IMR-90 (cell line): ENCODE measurements at regions of chr2 and their contacts with region 1.

Region 1: GRCh38 chr2:157336137-157337010 is 10.8 kb upstream of the ERMN start:
- DNase-seq: peak; percentile 34
- ATAC-seq: peak; percentile 53; the same call in 1 of the 2 replicates
- H3K4me3 ChIP-seq: no peak overlapping the region
- H3K27ac ChIP-seq: no peak overlapping the region
- H3K4me1 ChIP-seq: no peaks in the 10 kb centered on the region
- H3K27me3 ChIP-seq: no peaks in the 10 kb centered on the region; the same call in 1 of the 2 replicates
- CTCF ChIP-seq: peak; percentile 61
- POLR2A ChIP-seq: no peak
- RAD21 ChIP-seq: peak; percentile 34; the same call in 1 of the 2 replicates

Region 2: DNA sequence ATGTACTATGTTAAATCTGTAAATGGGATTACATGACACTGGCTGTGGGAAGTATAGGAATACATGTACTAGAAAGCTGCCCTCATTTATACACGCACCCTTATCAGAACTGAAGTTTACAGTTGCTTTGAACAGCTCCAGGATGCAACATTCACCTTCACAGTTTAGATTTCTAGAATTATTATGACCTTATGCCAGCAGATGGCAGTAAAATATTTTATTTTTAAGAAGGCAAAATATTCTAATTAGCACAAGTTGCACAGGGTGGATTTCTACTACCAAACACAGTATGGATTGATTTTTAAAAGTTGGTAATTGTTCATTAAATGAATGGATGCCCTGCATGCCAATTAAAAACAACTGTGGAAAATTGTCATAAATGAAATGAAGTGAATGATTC is 1967.4 kb before region 1 on chr2:
- CTCF ChIA-PET with region 1: no interaction called
- POLR2A ChIA-PET with region 1: no interaction called
- dilution Hi-C with region 1: no loop called
- in situ Hi-C with region 1: no loop called
- intact Hi-C with region 1: loop called (anchors 2 kb)
- DNase-seq: peak; percentile 0
- ATAC-seq: no peak
- H3K4me3 ChIP-seq: no peak overlapping the region
- H3K27ac ChIP-seq: no peak overlapping the region
- H3K4me1 ChIP-seq: no peaks in the 10 kb centered on the region
- H3K27me3 ChIP-seq: no peaks in the 10 kb centered on the region
- CTCF ChIP-seq: peak; percentile 26
- POLR2A ChIP-seq: no peak
- RAD21 ChIP-seq: no peak

Region 3: DNA sequence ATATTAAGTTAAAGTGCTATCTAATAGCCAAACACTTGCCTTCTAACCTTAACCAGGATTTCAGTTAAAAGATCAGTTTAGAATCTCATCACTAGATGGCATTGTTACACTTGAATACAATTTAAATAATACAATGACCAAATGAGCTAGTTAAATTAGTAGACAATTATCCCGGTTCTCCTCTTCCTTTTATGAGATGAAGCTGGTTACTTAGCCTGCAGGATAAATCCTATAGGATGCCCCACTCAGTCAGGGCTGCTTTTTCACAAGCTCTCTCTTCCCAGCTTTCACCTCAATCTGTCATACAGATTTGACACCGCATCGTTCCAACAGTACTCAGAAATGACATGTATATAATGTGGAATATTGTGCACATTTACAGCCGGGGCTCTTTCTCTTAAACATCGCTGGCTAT is 1959.1 kb before region 1 on chr2:
- CTCF ChIA-PET with region 1: interaction called, 11 read pairs
- POLR2A ChIA-PET with region 1: no interaction called
- dilution Hi-C with region 1: no loop called
- in situ Hi-C with region 1: loop called (anchors 25 kb)
- intact Hi-C with region 1: loop called (anchors 2 kb)
- DNase-seq: peak; percentile 35
- ATAC-seq: no peak
- H3K4me3 ChIP-seq: no peak overlapping the region
- H3K27ac ChIP-seq: no peak overlapping the region
- H3K4me1 ChIP-seq: no peaks in the 10 kb centered on the region
- H3K27me3 ChIP-seq: no peaks in the 10 kb centered on the region
- CTCF ChIP-seq: peak; percentile 43
- POLR2A ChIP-seq: no peak
- RAD21 ChIP-seq: peak; percentile 46

Region 4: GRCh38 chr2:156486147-156486546 is 850.2 kb before region 1 on chr2:
- CTCF ChIA-PET with region 1: no interaction called
- POLR2A ChIA-PET with region 1: no interaction called
- dilution Hi-C with region 1: no loop called
- in situ Hi-C with region 1: no loop called
- intact Hi-C with region 1: no loop called
- DNase-seq: peak; percentile 60
- ATAC-seq: no peak
- H3K4me3 ChIP-seq: no peak overlapping the region
- H3K27ac ChIP-seq: no peak overlapping the region
- H3K4me1 ChIP-seq: peaks cover 4% of the 10 kb centered on the region; the same call in 1 of the 2 replicates
- H3K27me3 ChIP-seq: no peaks in the 10 kb centered on the region
- CTCF ChIP-seq: no peak
- POLR2A ChIP-seq: no peak
- RAD21 ChIP-seq: no peak

Region 5: DNA sequence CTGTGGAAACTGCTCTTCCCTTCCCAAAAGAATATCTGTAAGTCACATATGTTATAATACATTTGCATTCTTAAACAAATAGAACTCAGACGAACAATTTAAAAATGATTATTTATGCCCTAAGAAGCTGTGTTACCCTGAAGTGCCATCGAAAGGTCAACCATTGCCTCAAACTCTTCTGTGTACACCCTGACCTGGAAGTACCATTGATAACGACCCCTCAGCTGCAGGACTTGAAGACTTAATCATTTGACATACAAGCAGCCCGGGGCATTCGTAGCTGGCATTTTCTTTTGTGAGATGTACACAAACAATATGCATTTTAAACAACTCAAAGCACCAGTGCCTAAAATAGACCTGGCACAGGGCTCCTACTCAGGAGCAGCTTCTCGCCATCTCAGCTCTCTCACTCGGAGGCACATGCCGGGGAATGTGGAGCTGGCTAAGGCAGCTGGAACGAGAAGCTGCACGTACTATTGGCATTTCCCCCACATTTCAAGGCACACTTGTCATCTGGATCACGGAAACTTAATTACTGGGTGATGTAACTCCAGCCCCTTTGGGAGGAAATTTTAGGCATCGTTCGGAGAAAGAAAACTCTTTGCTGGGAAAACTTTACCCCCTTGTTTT is 248.9 kb before region 1 on chr2:
- CTCF ChIA-PET with region 1: no interaction called
- POLR2A ChIA-PET with region 1: no interaction called
- dilution Hi-C with region 1: no loop called
- in situ Hi-C with region 1: no loop called
- intact Hi-C with region 1: no loop called
- DNase-seq: peak; percentile 68
- ATAC-seq: peak; percentile 68
- H3K4me3 ChIP-seq: no peak overlapping the region
- H3K27ac ChIP-seq: no peak overlapping the region; the same call in 1 of the 2 replicates
- H3K4me1 ChIP-seq: peaks cover 7% of the 10 kb centered on the region
- H3K27me3 ChIP-seq: no peaks in the 10 kb centered on the region
- CTCF ChIP-seq: no peak
- POLR2A ChIP-seq: no peak
- RAD21 ChIP-seq: no peak

Region 6: DNA sequence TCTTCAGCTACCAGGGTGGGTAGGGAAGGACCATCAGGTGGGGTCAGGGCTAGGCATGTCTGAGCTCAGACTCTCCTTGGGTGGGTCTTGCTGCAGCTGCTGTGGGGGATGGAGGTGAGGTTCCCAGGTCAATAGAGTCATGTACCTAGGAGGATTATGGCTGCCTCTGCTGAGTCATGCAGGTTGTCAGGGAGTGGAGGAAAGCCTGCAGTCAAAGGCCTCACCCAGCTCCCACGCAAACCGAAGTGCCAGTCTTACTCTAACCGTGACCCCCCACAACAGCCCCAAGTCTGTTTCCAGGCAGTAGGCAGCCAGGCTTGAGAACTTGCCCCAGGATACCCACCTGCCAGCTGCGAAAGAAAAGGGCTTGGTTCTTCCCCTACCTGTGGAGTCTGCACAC is 192.5 kb before region 1 on chr2:
- CTCF ChIA-PET with region 1: no interaction called
- POLR2A ChIA-PET with region 1: no interaction called
- dilution Hi-C with region 1: no loop called
- in situ Hi-C with region 1: no loop called
- intact Hi-C with region 1: no loop called
- DNase-seq: no peak
- ATAC-seq: no peak
- H3K4me3 ChIP-seq: no peak overlapping the region
- H3K27ac ChIP-seq: no peak overlapping the region
- H3K4me1 ChIP-seq: peaks cover 5% of the 10 kb centered on the region
- H3K27me3 ChIP-seq: no peaks in the 10 kb centered on the region
- CTCF ChIP-seq: no peak
- POLR2A ChIP-seq: no peak
- RAD21 ChIP-seq: no peak

Region 7: GRCh38 chr2:157302492-157303099 is 33.8 kb before region 1 on chr2:
- CTCF ChIA-PET with region 1: interaction called, 5 read pairs
- POLR2A ChIA-PET with region 1: no interaction called
- dilution Hi-C with region 1: no loop called
- in situ Hi-C with region 1: no loop called
- intact Hi-C with region 1: loop called (anchors 2 kb)
- DNase-seq: peak; percentile 44
- ATAC-seq: peak; percentile 59
- H3K4me3 ChIP-seq: no peak overlapping the region
- H3K27ac ChIP-seq: no peak overlapping the region
- H3K4me1 ChIP-seq: peaks cover 4% of the 10 kb centered on the region; the same call in 1 of the 2 replicates
- H3K27me3 ChIP-seq: no peaks in the 10 kb centered on the region
- CTCF ChIP-seq: peak; percentile 70
- POLR2A ChIP-seq: no peak
- RAD21 ChIP-seq: peak; percentile 67